CD4-positive, alpha-beta T cell (primary cell): ENCODE measurements at regions of chr16 and their contacts with region 1.

Region 1: GRCh38 chr16:30571695-30572600 is at the start of gene ZNF688:
- DNase-seq: peak; percentile 87 to 99 (median 92)
- ATAC-seq: peak; percentile 79
- H3K4me3 ChIP-seq: peak within 1 kb of the TSS; percentile 94
- H3K4me3 Mint-ChIP-seq: peak within 1 kb of the TSS; percentile 98
- H3K27ac ChIP-seq: peak within 1 kb of the TSS; percentile 90 to 96
- H3K27ac Mint-ChIP-seq: peak within 1 kb of the TSS; percentile 97
- H3K4me1 ChIP-seq: peaks cover 51% of the 10 kb centered on the region
- H3K4me1 Mint-ChIP-seq: peaks cover 42% of the 10 kb centered on the region
- H3K27me3 ChIP-seq: no peaks in the 10 kb centered on the region
- H3K27me3 Mint-ChIP-seq: no peaks in the 10 kb centered on the region
- CTCF ChIP-seq: no peak
- total RNA-seq, gene ZNF688: 8.8 to 9.6 TPM

Region 2: GRCh38 chr16:30472328-30472942 is 99.5 kb before region 1 on chr16 and contains the start of gene ITGAL:
- CTCF ChIA-PET with region 1: no interaction called
- POLR2A ChIA-PET with region 1: interaction called, 11 read pairs
- intact Hi-C with region 1: no loop called
- DNase-seq: peak; percentile 63 to 96 (median 80)
- ATAC-seq: peak; percentile 83
- H3K4me3 ChIP-seq: peak within 1 kb of the TSS; percentile 83
- H3K4me3 Mint-ChIP-seq: peak within 1 kb of the TSS; percentile 96
- H3K27ac ChIP-seq: peak within 1 kb of the TSS; percentile 75 to 94
- H3K27ac Mint-ChIP-seq: peak within 1 kb of the TSS; percentile 90
- H3K4me1 ChIP-seq: peaks cover 81% of the 10 kb centered on the region
- H3K4me1 Mint-ChIP-seq: peaks cover 70% of the 10 kb centered on the region
- H3K27me3 ChIP-seq: no peaks in the 10 kb centered on the region
- H3K27me3 Mint-ChIP-seq: no peaks in the 10 kb centered on the region
- CTCF ChIP-seq: no peak
- total RNA-seq, gene ITGAL: 186 to 187 TPM

Region 3: DNA sequence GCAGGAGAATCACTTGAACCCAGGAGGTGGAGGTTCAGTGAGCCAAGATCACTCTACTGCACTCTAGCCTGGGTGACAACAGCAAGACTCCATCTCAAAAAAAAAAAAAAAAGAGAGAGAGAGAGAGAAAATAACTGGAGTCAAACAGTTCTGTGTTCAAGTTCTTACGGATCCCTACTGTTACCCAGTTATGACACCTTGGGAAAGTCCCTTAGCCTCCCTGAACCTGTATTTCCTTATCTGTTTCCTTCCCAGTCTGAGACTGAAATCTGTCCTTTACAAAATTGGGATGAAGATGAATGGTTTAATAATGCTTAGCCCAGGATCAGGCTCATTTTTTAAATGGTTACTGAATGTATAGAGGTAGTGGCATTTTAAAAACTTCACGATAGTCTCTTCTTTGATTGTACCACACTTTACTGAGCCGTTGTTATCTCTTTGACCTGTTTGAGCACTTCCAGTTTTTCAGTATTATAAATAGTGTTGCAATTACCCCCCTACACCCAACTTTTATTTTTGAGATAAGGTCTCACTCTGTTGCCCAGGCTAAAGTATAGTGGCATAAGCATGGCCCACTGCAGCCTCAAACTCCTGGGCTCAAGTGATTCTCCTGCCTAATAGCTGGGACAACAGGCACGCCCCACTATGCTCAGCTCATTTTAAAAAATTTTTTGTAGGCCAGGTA is 62.7 kb before region 1 on chr16:
- CTCF ChIA-PET with region 1: no interaction called
- POLR2A ChIA-PET with region 1: no interaction called
- intact Hi-C with region 1: no loop called
- DNase-seq: no peak
- ATAC-seq: no peak
- H3K4me3 ChIP-seq: no peak overlapping the region
- H3K4me3 Mint-ChIP-seq: no peak overlapping the region
- H3K27ac ChIP-seq: no peak overlapping the region
- H3K27ac Mint-ChIP-seq: peak overlapping the region; percentile 56
- H3K4me1 ChIP-seq: peaks cover 5% of the 10 kb centered on the region
- H3K4me1 Mint-ChIP-seq: peaks cover 5% of the 10 kb centered on the region
- H3K27me3 ChIP-seq: no peaks in the 10 kb centered on the region
- H3K27me3 Mint-ChIP-seq: no peaks in the 10 kb centered on the region
- CTCF ChIP-seq: no peak

Region 4: GRCh38 chr16:30534368-30535105 is 37.4 kb before region 1 on chr16 and contains the start of gene ZNF747:
- CTCF ChIA-PET with region 1: interaction called, 15 read pairs
- POLR2A ChIA-PET with region 1: interaction called, 69 read pairs
- intact Hi-C with region 1: loop called (anchors 1 kb)
- DNase-seq: peak; percentile 88 to 95 (median 92)
- ATAC-seq: peak; percentile 80
- H3K4me3 ChIP-seq: peak within 1 kb of the TSS; percentile 87
- H3K4me3 Mint-ChIP-seq: peak within 1 kb of the TSS; percentile 94
- H3K27ac ChIP-seq: peak within 1 kb of the TSS; percentile 85 to 96
- H3K27ac Mint-ChIP-seq: peak within 1 kb of the TSS; percentile 99
- H3K4me1 ChIP-seq: peaks cover 52% of the 10 kb centered on the region
- H3K4me1 Mint-ChIP-seq: peaks cover 43% of the 10 kb centered on the region
- H3K27me3 ChIP-seq: no peaks in the 10 kb centered on the region
- H3K27me3 Mint-ChIP-seq: no peaks in the 10 kb centered on the region
- CTCF ChIP-seq: no peak
- total RNA-seq, gene ZNF747: 6.3 to 6.7 TPM

Region 5: DNA sequence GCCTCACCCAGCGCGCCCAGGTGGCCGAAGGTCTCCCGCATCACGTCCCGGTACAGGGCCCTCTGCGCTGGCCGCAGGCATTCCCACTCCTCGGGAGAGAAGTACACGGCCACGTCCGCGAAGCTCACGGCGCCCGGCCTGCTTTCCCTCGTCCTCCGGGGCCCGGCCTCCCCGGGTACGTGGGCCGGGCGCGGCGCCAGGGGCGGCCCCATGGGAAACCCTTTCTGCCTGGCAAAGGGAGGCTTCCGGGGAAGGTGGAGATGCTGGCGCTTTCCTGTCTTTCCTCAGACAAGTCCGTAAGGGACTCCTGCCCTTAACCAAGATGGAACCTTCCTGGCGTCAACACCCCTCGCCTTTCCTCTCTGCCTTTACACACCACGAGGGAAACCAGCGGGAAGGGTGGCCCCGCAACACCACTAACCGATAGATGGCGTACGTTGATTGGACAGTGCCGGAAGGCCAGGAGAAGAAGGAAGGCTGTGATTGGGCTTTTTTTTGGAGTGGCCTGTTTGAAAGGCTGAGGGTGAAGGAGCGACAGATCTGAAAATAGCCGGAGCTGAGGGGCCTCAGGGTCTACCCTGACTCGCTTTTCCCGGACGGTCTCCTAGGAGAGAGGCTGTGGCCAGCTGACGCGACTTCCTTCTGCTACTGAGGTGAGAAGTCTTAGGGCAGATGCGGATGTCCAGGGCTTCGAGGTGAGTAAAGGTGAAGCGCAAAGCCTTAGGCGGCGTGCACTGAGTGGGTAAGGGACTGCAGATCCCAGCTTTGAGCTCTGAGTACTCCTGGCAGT is 13.6 kb after region 1 on chr16 and contains the start of gene ZNF785:
- CTCF ChIA-PET with region 1: interaction called, 5 read pairs
- POLR2A ChIA-PET with region 1: interaction called, 41 read pairs
- intact Hi-C with region 1: loop called (anchors 1 kb)
- DNase-seq: peak; percentile 81 to 97 (median 87)
- ATAC-seq: peak; percentile 99
- H3K4me3 ChIP-seq: peak within 1 kb of the TSS; percentile 64
- H3K4me3 Mint-ChIP-seq: peak within 1 kb of the TSS; percentile 92
- H3K27ac ChIP-seq: peak within 1 kb of the TSS; percentile 53 to 57
- H3K27ac Mint-ChIP-seq: peak within 1 kb of the TSS; percentile 93
- H3K4me1 ChIP-seq: peaks cover 26% of the 10 kb centered on the region
- H3K4me1 Mint-ChIP-seq: peaks cover 18% of the 10 kb centered on the region
- H3K27me3 ChIP-seq: no peaks in the 10 kb centered on the region
- H3K27me3 Mint-ChIP-seq: no peaks in the 10 kb centered on the region
- CTCF ChIP-seq: no peak
- total RNA-seq, gene ZNF785: 6.6 to 7.7 TPM

Region 6: GRCh38 chr16:30637942-30638341 is 66.0 kb after region 1 on chr16:
- CTCF ChIA-PET with region 1: no interaction called
- POLR2A ChIA-PET with region 1: interaction called, 6 read pairs
- intact Hi-C with region 1: loop called in 1 of 2 experiments (anchors 5 kb)
- DNase-seq: peak in 4 of 14 experiments; percentile 19 to 75 (median 63)
- ATAC-seq: peak; percentile 17
- H3K4me3 ChIP-seq: no peak overlapping the region
- H3K4me3 Mint-ChIP-seq: peak overlapping the region; percentile 48
- H3K27ac ChIP-seq: no peak overlapping the region
- H3K27ac Mint-ChIP-seq: no peak overlapping the region
- H3K4me1 ChIP-seq: peaks cover 19% of the 10 kb centered on the region
- H3K4me1 Mint-ChIP-seq: peaks cover 17% of the 10 kb centered on the region
- H3K27me3 ChIP-seq: no peaks in the 10 kb centered on the region
- H3K27me3 Mint-ChIP-seq: no peaks in the 10 kb centered on the region
- CTCF ChIP-seq: peak; percentile 24

Region 7: GRCh38 chr16:30698139-30698815 is 126.3 kb after region 1 on chr16:
- CTCF ChIA-PET with region 1: no interaction called
- POLR2A ChIA-PET with region 1: interaction called, 4 read pairs
- intact Hi-C with region 1: loop called in 1 of 2 experiments (anchors 5 kb)
- DNase-seq: peak; percentile 97 to 100 (median 99)
- ATAC-seq: peak; percentile 75
- H3K4me3 ChIP-seq: peak overlapping the region; percentile 97
- H3K4me3 Mint-ChIP-seq: peak overlapping the region; percentile 98
- H3K27ac ChIP-seq: peak overlapping the region; percentile 100
- H3K27ac Mint-ChIP-seq: peak overlapping the region; percentile 100
- H3K4me1 ChIP-seq: peaks cover 38% of the 10 kb centered on the region
- H3K4me1 Mint-ChIP-seq: peaks cover 37% of the 10 kb centered on the region
- H3K27me3 ChIP-seq: no peaks in the 10 kb centered on the region
- H3K27me3 Mint-ChIP-seq: no peaks in the 10 kb centered on the region
- CTCF ChIP-seq: no peak